Sigmoid colon (tissue), 7 donors: ENCODE measurements at regions of chr3 and their contacts with region 1.

Region 1: DNA sequence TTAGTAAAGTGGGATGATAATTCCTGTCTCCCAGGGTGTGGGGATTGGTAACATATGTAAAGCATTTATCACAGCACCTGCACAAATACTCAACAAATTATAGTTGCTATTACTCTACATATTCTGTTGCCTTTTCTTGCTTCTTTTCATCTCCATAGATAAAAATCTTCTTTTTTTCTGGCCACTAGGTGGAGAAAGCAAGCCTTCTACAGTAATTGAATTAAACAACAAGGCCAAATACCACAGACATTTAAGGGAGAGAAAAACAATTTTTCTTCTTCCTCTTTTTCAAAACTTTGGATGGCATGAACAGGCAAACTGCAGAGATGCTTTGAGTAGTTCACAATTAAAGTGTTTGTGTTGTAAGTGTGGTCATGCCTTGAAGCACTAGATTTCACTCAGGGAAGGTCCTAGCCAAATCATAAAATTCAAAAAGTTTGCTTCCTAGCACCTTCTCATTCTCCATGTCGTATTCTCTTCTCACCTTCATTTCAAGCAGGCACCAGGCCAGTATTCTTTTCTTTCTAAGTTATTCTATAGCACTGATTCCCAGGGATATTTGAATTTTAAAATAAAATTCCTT is 493.4 kb upstream of the TGFBR2 start:
- DNase-seq: no peak
- H3K4me3 ChIP-seq: no peak overlapping the region
- H3K27ac ChIP-seq: no peak overlapping the region
- H3K4me1 ChIP-seq: peaks cover 0 to 11% (median 8%) of the 10 kb centered on the region in 4 donors
- H3K27me3 ChIP-seq: no peaks in the 10 kb centered on the region
- CTCF ChIP-seq: peak; percentile 53 to 75 (median 63)
- EP300 ChIP-seq: no peak
- POLR2A ChIP-seq: no peak

Region 2: DNA sequence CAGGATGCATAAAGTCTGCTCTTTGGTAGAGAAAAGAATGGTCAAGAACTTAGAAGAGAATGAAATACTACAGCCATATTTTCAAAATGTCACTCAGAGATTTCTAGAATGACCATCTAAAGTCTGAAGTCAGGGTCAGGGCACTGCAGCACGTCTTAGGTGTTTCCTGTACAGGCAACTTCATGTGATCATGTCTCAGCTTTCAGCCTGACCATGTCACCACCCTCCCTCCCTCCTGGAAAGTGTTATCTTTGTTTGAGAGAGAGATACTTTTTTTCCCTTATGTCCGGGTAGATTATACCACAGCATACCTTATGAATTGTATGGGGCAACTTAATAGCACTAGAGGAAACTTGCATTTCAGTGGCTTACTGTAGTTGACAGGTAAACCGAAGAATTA is 64.6 kb before region 1 on chr3:
- intact Hi-C with region 1: no loop called
- DNase-seq: no peak
- H3K4me3 ChIP-seq: no peak overlapping the region
- H3K27ac ChIP-seq: no peak overlapping the region
- H3K4me1 ChIP-seq: no peaks in the 10 kb centered on the region
- H3K27me3 ChIP-seq: no peaks in the 10 kb centered on the region
- CTCF ChIP-seq: no peak
- EP300 ChIP-seq: no peak
- POLR2A ChIP-seq: no peak

Region 3: DNA sequence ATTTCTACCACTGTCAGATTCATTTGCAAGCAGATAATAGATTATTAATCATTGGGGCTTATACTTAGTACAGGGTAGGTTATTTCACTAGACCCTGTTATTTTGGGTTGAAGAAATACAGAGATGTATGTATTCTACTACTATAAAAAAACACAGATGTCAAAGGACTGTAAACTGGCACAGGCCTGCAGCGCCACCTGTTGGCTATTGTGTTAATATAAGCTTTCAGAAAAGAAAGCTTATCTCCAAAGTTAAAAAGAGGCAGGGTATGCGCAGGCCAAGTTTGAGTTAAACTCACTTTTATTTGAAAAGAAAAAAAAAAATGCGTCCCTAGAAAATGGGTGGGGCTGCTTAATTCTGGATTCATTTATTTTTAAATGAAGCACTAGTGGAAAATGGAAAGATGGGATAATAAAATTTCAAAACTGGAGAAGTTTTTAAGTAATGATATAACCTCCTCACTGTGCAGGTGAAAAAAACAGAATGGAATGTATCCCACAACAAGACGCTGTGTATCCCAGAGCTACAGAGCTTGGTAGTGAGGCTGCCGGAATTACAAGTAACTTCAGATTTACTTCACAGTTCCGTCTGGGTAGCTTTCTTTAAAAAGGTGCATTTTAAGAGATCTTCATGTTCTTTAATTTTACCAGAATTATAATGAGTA is 86.2 kb after region 1 on chr3:
- intact Hi-C with region 1: loop called (anchors 5 kb)
- DNase-seq: peak; percentile 85
- H3K4me3 ChIP-seq: no peak overlapping the region
- H3K27ac ChIP-seq: no peak overlapping the region
- H3K4me1 ChIP-seq: peaks cover 0 to 12% (median 5%) of the 10 kb centered on the region in 4 donors
- H3K27me3 ChIP-seq: no peaks in the 10 kb centered on the region
- CTCF ChIP-seq: peak; percentile 18 to 86 (median 75)
- EP300 ChIP-seq: no peak
- POLR2A ChIP-seq: no peak

Region 4: GRCh38 chr3:30751610-30752299 is 638.8 kb after region 1 on chr3:
- intact Hi-C with region 1: loop called (anchors 5 kb)
- DNase-seq: no peak
- H3K4me3 ChIP-seq: no peak overlapping the region
- H3K27ac ChIP-seq: no peak overlapping the region
- H3K4me1 ChIP-seq: peaks cover 0 to 21% (median 8%) of the 10 kb centered on the region in 4 donors
- H3K27me3 ChIP-seq: no peaks in the 10 kb centered on the region
- CTCF ChIP-seq: peak in 2 of 4 experiments; percentile 10 to 23
- EP300 ChIP-seq: no peak
- POLR2A ChIP-seq: no peak